ENCODE measurements at regions of chr15 and their contacts with region 1.

Region 1: DNA sequence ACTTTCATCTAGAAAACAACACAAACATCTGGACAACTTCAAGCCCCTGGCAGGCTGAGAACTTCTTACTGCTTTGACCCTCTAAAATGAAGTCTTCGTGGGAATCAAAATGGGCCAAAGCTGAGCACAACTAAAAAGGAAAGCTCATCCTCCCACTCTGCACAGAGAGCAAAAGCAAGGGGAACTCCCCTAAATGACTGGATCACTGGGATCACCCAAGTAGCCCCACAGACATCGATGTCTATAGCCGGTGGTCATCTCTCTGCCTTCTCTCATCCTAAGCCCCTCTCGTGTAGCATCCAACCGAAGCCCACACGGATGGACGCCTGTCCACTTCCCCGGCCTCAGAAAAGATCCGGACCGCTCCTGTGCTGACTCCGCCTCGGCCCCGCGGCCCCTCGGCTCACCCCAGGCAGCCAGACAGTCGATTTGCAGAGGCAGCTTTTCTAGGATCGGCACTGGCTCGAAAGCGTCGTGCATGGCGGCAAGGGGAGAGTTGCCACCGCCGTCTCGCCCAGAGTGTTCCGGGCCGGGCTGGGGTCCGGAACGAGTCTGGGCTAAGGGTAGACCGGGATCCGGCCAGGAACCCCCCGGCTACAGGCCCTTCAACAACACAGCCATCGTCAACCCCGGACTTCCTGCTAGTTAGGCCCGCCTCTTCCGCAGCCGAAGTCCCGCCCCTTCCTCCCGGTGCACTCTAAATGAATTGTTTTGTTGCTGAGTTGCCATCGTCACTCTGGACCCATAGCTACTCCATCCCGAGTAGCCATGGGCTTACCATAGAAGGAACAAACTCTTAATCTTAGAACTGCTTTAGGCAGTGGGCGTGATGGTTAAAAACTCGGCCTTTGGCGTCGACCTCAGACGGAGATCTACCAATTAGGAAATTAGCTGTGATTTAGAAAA is at the start of gene VPS39:
- DNase-seq: peak; percentile 75
- H3K4me3 Mint-ChIP-seq: peak within 1 kb of the TSS; percentile 95
- H3K27ac Mint-ChIP-seq: peak within 1 kb of the TSS; percentile 92
- H3K4me1 Mint-ChIP-seq: peaks cover 26% of the 10 kb centered on the region
- H3K27me3 Mint-ChIP-seq: no peaks in the 10 kb centered on the region
- CTCF ChIP-seq: no peak
- total RNA-seq, gene VPS39: 47.1 and 53.9 TPM in 2 replicates

Region 2: DNA sequence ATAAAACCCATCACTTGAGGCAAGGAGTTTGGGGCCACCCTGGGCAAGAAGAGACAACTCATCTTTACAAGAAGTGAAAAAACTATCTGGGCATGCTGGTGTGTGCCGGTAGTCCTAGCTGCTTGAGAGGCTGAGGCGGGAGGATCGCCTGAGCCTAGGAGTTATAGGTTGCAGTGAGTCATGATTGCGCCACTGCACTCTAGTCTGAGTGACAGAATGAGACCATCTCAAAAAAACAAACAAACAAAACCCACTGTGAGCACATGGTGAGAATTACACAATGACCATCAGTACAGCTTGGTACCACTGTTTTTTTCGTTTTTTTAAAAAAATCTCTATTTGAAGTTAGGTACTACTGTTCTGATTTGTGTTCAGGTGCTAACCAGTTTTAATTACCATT is 13.4 kb before region 1 on chr15:
- CTCF ChIA-PET with region 1: no interaction called
- POLR2A ChIA-PET with region 1: interaction called, 19 read pairs
- intact Hi-C with region 1: no loop called
- DNase-seq: peak; percentile 96
- H3K4me3 Mint-ChIP-seq: no peak overlapping the region
- H3K27ac Mint-ChIP-seq: no peak overlapping the region
- H3K4me1 Mint-ChIP-seq: no peaks in the 10 kb centered on the region
- H3K27me3 Mint-ChIP-seq: no peaks in the 10 kb centered on the region
- CTCF ChIP-seq: no peak

Region 3: DNA sequence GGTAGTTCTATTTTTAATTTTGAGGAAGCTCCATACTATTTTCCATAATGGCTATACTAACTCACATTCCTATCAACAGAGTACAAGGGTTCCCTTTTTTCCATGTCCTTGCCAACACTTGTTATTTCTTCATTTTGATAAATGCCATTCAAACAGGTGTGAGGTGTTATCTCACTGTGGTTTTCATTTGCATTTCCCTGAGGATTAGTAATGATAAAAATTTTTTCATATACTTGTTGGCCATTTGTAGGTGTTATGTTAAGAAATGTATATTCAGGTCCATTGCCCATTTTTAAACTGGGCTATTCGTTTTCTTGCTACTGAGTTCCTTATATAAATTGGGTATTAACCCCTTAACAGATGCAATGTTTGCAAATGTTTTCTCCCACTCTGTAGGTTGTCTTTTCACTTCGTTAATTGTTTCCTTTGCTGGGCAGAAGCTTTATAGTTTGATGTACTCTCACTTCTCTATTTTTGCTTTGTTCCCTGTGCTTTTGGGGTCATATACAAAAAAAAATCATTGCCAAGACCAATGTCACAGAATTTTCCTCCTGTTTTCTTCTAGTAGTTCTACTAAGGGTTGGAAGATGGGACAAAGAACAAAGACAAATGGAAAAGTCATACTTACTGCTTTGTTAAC is 11.1 kb after region 1 on chr15:
- CTCF ChIA-PET with region 1: no interaction called
- POLR2A ChIA-PET with region 1: interaction called, 14 read pairs
- intact Hi-C with region 1: no loop called
- DNase-seq: no peak
- H3K4me3 Mint-ChIP-seq: no peak overlapping the region
- H3K27ac Mint-ChIP-seq: no peak overlapping the region
- H3K4me1 Mint-ChIP-seq: no peaks in the 10 kb centered on the region
- H3K27me3 Mint-ChIP-seq: no peaks in the 10 kb centered on the region
- CTCF ChIP-seq: no peak

Region 4: DNA sequence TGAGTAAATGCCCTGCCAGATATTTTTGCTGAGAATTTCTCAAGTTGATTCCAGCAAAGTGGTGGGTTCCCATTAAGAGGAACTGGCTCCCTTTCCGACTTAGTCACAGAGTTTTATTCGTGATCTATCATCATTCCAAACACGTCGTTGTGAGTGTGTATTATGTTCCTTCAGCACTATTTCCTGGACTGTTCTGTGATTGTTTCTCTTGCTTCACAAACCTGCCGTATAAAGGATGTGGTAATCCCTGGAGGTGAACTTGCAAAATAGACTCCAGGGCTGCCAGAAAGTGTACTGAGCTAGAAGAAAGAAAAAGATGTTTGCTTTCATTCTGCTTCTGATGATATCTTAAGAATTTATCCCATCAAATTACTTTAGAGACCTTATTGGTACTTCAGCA is 136.8 kb after region 1 on chr15:
- CTCF ChIA-PET with region 1: no interaction called
- POLR2A ChIA-PET with region 1: no interaction called
- intact Hi-C with region 1: no loop called
- DNase-seq: peak; percentile 72
- H3K4me3 Mint-ChIP-seq: no peak overlapping the region
- H3K27ac Mint-ChIP-seq: peak overlapping the region; percentile 28
- H3K4me1 Mint-ChIP-seq: peaks cover 13% of the 10 kb centered on the region
- H3K27me3 Mint-ChIP-seq: no peaks in the 10 kb centered on the region
- CTCF ChIP-seq: no peak

Region 5: GRCh38 chr15:42401544-42402454 is 193.9 kb after region 1 on chr15:
- CTCF ChIA-PET with region 1: no interaction called
- POLR2A ChIA-PET with region 1: no interaction called
- intact Hi-C with region 1: no loop called
- DNase-seq: no peak
- H3K4me3 Mint-ChIP-seq: no peak overlapping the region
- H3K27ac Mint-ChIP-seq: no peak overlapping the region
- H3K4me1 Mint-ChIP-seq: no peaks in the 10 kb centered on the region
- H3K27me3 Mint-ChIP-seq: no peaks in the 10 kb centered on the region
- CTCF ChIP-seq: no peak

Region 6: GRCh38 chr15:42695527-42696071 is 487.7 kb after region 1 on chr15:
- CTCF ChIA-PET with region 1: no interaction called
- POLR2A ChIA-PET with region 1: no interaction called
- intact Hi-C with region 1: no loop called
- DNase-seq: no peak
- H3K4me3 Mint-ChIP-seq: no peak overlapping the region
- H3K27ac Mint-ChIP-seq: no peak overlapping the region
- H3K4me1 Mint-ChIP-seq: no peaks in the 10 kb centered on the region
- H3K27me3 Mint-ChIP-seq: no peaks in the 10 kb centered on the region
- CTCF ChIP-seq: no peak

Measured in MCF 10A (cell line).